Right cardiac atrium (tissue), 5 donors: ENCODE measurements at regions of chr9 and their contacts with region 1.

Region 1: GRCh38 chr9:29637448-29638237 is 2064.4 kb upstream of the C9orf72 start:
- DNase-seq: no peak
- ATAC-seq: no peak
- H3K4me3 ChIP-seq: no peak overlapping the region
- H3K27ac ChIP-seq: no peak overlapping the region
- H3K4me1 ChIP-seq: no peaks in the 10 kb centered on the region
- H3K27me3 ChIP-seq: no peaks in the 10 kb centered on the region

Region 2: GRCh38 chr9:29609282-29609681 is 28.4 kb before region 1 on chr9:
- intact Hi-C with region 1: loop called in 1 of 4 experiments (anchors 5 kb)
- DNase-seq: no peak
- ATAC-seq: no peak
- H3K4me3 ChIP-seq: no peak overlapping the region
- H3K27ac ChIP-seq: no peak overlapping the region
- H3K4me1 ChIP-seq: no peaks in the 10 kb centered on the region
- H3K27me3 ChIP-seq: no peaks in the 10 kb centered on the region

Region 3: GRCh38 chr9:30039712-30040111 is 402.1 kb after region 1 on chr9:
- intact Hi-C with region 1: no loop called
- DNase-seq: no peak
- ATAC-seq: no peak
- H3K4me3 ChIP-seq: no peak overlapping the region
- H3K27ac ChIP-seq: no peak overlapping the region
- H3K4me1 ChIP-seq: no peaks in the 10 kb centered on the region
- H3K27me3 ChIP-seq: no peaks in the 10 kb centered on the region